Aorta (tissue), 5 donors: ENCODE measurements at regions of chr5 and their contacts with region 1.

Region 1: DNA sequence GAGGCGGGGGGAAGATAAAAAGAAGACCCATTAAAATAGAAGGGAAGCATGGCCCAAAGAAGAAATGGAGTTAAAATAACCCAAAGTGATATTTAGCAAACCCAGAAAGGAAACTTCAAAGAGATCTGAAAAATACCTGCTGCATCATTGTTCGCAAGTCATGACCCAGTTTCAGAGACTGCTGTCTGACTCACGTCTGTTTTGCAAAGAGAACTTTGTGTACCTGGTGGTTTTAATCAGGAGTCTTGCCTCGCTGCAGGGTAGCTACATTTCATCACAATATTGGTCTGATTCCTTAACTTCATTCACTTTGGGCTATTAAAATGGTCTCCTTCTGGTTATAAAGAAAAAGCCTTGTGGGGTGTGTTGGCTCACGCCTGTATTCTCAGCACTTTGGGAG is 461.1 kb upstream of the DAP start:
- DNase-seq: no peak
- ATAC-seq: no peak
- H3K4me3 ChIP-seq: no peak overlapping the region
- H3K27ac ChIP-seq: no peak overlapping the region
- H3K4me1 ChIP-seq: no peaks in the 10 kb centered on the region
- H3K27me3 ChIP-seq: no peaks in the 10 kb centered on the region

Region 2: GRCh38 chr5:11234501-11234911 is 12.3 kb after region 1 on chr5:
- intact Hi-C with region 1: loop called in 1 of 2 experiments (anchors 1 kb)
- DNase-seq: no peak
- ATAC-seq: peak; percentile 48
- H3K4me3 ChIP-seq: no peak overlapping the region
- H3K27ac ChIP-seq: no peak overlapping the region
- H3K4me1 ChIP-seq: no peaks in the 10 kb centered on the region
- H3K27me3 ChIP-seq: no peaks in the 10 kb centered on the region

Region 3: DNA sequence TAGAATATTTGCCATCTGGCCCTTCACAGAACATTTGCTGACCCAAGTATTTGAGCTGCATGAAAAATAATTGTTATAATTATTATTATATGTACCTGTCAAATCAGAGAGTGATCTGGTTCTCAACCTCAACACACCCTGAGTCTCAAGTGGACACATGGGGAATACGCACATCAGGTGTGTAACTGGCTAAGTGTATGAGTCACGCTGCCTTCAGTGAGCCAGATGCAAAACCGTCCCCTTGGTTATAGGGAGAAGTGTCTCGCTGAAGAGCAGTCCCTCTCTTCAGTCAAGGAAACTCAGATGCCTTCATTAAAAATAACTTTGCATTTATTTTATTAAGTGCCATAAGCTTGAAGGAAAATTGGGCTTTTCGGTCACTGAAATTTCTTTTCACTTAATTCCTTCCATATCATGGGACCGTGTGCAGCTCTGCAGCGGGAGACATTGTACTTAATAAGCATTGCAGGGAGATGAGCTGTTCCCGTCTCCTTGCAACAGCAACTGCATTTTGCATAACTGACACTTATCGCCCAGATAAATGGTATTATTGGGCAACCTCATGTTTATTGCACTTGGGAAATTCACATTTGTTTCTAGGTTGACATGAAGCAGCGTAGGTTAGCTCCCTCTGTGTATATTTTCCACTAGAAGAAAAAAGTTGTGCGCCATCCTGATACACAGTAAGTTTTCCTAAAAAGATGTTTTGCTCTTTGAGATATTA is 51.2 kb after region 1 on chr5:
- intact Hi-C with region 1: no loop called
- DNase-seq: no peak
- ATAC-seq: no peak
- H3K4me3 ChIP-seq: no peak overlapping the region
- H3K27ac ChIP-seq: no peak overlapping the region
- H3K4me1 ChIP-seq: no peaks in the 10 kb centered on the region
- H3K27me3 ChIP-seq: no peaks in the 10 kb centered on the region

Region 4: GRCh38 chr5:12277504-12278192 is 1055.5 kb after region 1 on chr5:
- intact Hi-C with region 1: no loop called
- DNase-seq: no peak
- ATAC-seq: no peak
- H3K4me3 ChIP-seq: no peak overlapping the region
- H3K27ac ChIP-seq: no peak overlapping the region
- H3K4me1 ChIP-seq: no peaks in the 10 kb centered on the region
- H3K27me3 ChIP-seq: no peaks in the 10 kb centered on the region